Activated CD8-positive, alpha-beta T cell treated with anti-CD3 and anti-CD28 coated beads for 36 hours (primary cell): ENCODE measurements at regions of chr11 and their contacts with region 1.

Region 1: DNA sequence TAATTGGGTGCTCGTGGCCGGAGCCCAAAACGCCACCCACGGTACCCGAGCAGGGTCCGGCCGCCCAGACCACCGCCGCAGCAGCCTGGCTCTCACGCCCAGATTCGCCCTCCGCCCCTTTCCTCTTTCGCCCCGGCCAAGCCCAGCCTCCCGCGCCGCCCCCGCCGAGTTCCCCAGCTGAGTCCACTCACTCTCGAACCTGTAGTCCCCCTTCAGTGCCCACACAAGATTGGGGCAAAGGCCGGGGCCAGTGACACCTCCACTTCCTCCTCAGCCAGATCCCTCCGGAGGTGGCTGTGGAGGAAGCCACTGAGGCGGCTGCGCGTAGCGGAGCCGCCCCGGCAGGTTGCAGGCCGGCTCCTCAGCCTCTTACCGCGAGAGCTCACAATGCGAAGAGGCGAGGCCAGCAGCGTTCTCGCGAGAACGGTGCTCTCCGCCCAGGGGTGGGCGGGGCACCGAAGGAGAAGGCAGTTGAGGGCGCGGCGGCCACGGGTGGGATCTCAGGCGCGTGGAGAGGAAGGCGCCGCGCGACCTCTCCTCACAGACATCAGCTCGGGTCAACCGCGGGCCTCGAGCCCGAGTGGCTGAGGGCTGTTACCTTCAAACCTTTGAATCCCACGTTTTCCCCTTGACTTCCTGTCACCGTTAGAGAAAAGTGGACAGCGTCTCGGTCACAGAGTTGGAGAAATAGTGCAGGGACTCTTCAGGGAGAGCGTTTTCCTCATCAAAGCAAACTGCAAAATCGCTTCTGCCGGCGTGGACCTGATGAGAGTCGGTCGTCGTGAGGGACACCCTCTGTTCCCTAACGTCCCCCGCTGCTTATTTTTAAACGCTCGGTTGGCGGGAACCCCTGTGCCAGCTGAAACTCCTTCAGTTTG is at the start of gene BTBD10:
- DNase-seq: peak; percentile 93
- ATAC-seq: peak; percentile 99
- H3K4me3 Mint-ChIP-seq: peak within 1 kb of the TSS; percentile 88
- H3K27ac Mint-ChIP-seq: peak within 1 kb of the TSS; percentile 98
- H3K4me1 Mint-ChIP-seq: peaks cover 38% of the 10 kb centered on the region
- H3K27me3 Mint-ChIP-seq: no peaks in the 10 kb centered on the region
- CTCF ChIP-seq: no peak
- total RNA-seq, gene BTBD10: 17.5 to 20.5 TPM

Region 2: DNA sequence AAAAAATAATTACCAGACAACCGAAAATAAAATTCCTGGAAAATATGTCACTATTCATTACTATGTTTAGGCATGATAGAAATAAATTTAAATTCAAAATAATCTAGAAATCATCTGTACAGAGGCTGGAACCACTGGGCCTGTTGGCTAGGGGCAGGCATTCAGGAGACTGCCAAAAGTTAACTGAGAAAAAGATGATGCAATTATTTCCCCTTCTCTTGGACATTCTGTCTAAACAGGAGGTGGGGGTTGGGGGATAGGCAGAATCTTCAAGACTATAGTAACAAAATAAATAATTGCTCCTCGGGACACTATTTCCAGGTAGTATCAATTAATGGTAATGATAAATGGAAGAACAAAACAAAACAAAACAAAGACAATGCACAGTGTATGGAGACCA is 14.3 kb before region 1 on chr11:
- CTCF ChIA-PET with region 1: interaction called, 12 read pairs
- POLR2A ChIA-PET with region 1: interaction called, 15 read pairs
- intact Hi-C with region 1: no loop called
- DNase-seq: no peak
- ATAC-seq: no peak
- H3K4me3 Mint-ChIP-seq: no peak overlapping the region
- H3K27ac Mint-ChIP-seq: no peak overlapping the region
- H3K4me1 Mint-ChIP-seq: peaks cover 48% of the 10 kb centered on the region
- H3K27me3 Mint-ChIP-seq: no peaks in the 10 kb centered on the region
- CTCF ChIP-seq: no peak

Region 3: GRCh38 chr11:13475101-13475500 is 12.0 kb after region 1 on chr11:
- CTCF ChIA-PET with region 1: interaction called, 12 read pairs
- POLR2A ChIA-PET with region 1: interaction called, 5 read pairs
- intact Hi-C with region 1: no loop called
- DNase-seq: no peak
- ATAC-seq: no peak
- H3K4me3 Mint-ChIP-seq: no peak overlapping the region
- H3K27ac Mint-ChIP-seq: no peak overlapping the region
- H3K4me1 Mint-ChIP-seq: no peaks in the 10 kb centered on the region
- H3K27me3 Mint-ChIP-seq: peaks cover 17% of the 10 kb centered on the region
- CTCF ChIP-seq: no peak